Posterior cingulate gyrus (tissue), 11 donors: ENCODE measurements at regions of chr7 and their contacts with region 1.

Region 1: DNA sequence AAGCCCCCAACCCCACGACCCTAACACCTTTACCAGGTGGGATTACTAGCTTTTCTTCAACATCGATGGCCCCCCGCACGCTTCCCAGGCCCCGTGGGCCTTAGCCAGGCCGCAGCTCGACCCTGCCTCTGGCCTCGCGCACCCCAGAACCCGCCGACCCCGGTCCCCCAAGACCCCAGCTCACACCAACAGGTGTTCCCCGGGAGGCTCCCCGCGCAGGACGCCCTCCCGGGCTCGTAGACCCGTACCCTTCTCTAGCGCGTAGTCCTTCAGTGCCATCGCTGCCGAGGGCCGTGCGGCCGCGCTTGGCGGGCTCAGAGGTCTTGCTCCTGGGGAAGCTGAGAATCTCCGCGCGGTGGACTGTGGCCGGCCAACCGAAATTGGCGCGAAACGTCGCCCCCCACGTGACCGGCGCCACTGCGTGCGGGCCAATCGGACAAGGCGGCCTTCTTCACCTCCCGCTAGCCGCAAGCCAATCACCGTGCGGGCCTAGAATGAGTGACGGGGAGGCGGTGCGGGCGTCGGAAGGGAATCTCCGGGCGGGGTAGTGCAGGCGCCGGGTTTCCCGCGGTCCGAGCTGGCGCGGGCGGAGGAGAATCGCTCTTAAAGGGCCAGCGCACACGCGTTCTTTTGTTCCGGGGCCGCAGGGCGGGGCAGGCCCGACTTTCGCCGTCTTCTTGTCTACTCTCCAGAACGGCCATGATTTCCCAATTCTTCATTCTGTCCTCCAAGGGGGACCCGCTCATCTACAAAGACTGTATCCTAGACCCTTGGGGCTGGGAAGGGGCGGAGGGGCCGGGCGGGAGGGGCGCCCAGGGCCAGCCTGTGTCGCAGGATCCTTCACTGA is at the starts of genes AP4M1 and MCM7:
- DNase-seq: peak; percentile 99 to 100 (median 100)

Region 2: GRCh38 chr7:99984593-99984992 is 116.6 kb before region 1 on chr7:
- intact Hi-C with region 1: no loop called
- DNase-seq: no peak

Region 3: GRCh38 chr7:100015232-100016209 is 85.7 kb before region 1 on chr7 and contains the start of gene ZKSCAN1:
- intact Hi-C with region 1: no loop called
- DNase-seq: peak; percentile 82 to 98 (median 89)

Region 4: GRCh38 chr7:100077205-100077604 is 24.0 kb before region 1 on chr7:
- intact Hi-C with region 1: no loop called
- DNase-seq: no peak

Region 5: DNA sequence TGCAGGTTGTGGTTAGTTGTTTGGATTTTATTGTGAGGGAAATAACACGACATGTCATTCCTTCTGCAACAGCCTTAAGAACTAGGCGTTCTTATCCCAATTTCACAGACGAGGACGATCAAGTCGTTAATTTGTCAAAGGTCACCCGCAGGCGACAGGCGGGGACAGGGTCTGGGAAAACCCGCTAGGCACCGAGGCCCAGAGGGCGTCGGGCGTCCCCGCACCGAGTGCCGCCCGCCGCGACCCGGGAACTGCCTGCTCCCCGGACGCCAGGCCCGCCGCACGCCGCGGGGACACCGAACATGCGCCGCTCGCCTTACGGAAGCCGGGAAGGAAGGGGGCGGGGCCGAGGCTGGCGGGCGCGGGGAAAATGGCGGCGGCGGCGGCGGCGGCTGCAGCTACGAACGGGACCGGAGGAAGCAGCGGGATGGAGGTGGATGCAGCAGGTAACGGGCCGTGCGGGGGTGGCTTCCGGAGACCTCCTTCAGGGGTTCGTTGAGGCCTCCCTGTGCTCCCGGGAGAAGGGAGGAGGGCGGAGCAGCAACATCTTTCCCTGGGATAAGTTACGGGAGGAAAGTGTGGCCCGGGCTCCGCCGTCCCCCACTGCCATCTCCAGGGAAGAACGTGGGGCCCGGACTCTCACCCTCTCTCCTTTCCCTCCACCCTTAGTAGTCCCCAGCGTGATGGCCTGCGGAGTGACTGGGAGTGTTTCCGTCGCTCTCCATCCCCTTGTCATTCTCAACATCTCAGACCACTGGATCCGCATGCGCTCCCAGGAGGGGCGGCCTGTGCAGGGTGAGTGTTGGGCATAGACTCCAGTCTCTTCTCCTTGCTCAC is 12.4 kb before region 1 on chr7 and contains the start of gene COPS6:
- intact Hi-C with region 1: loop called (anchors 1 kb)
- DNase-seq: peak; percentile 72 to 97 (median 81)

Region 6: DNA sequence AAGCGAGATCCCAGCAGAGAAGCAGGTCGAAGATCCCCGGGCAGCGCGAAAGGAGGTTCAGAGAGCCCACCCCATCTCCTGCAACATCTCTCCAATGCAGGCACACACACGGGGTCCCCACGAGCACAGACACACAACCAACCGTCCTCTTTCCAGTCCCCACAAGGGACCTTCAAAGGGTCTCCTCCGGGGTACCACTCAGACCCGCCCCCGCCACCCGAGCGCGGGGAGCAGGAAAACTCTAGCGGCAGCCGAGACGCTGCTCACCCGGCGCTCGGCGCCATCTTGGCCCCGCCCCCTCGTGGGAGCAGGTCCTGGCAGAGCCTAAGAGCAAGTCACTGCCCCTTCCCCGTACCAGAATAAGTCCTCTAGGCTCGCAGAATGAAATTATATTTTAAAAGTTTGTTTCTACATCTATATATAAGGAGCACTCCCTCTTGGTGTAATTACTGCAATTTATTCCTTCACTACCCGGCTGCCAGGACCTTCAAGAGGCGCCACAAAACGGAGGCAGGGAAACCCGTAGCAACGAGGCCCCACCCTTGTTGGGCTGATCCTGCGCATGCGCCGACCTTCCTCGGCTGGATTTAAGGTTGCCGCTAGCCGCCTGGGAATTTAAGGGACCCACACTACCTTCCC is 17.9 kb after region 1 on chr7 and contains the starts of genes CNPY4 and TAF6:
- intact Hi-C with region 1: loop called (anchors 1 kb)
- DNase-seq: peak; percentile 94 to 99 (median 96)

Region 7: GRCh38 chr7:100126931-100127865 is 26.0 kb after region 1 on chr7 and contains the start of gene MBLAC1:
- intact Hi-C with region 1: loop called (anchors 2 kb)
- DNase-seq: peak; percentile 87 to 98 (median 92)